ENCODE measurements at regions of chr10 and their contacts with region 1.

Region 1: GRCh38 chr10:80444646-80445319 is 9.3 kb upstream of the TSPAN14 start:
- DNase-seq: no peak
- ATAC-seq: peak; percentile 92
- H3K4me3 ChIP-seq: no peak overlapping the region
- H3K27ac ChIP-seq: no peak overlapping the region
- H3K4me1 ChIP-seq: peaks cover 0 to 17% of the 10 kb centered on the region in 2 experiments; a peak in 2 of 4 replicates
- H3K27me3 ChIP-seq: no peaks in the 10 kb centered on the region
- CTCF ChIP-seq: peak; percentile 82 to 90 (median 86)
- POLR2A ChIP-seq: no peak
- RAD21 ChIP-seq: peak; percentile 98

Region 2: GRCh38 chr10:80371460-80371859 is 73.3 kb before region 1 on chr10:
- CTCF ChIA-PET with region 1: no interaction called
- POLR2A ChIA-PET with region 1: no interaction called
- RAD21 ChIA-PET with region 1: no interaction called
- intact Hi-C with region 1: no loop called
- DNase-seq: no peak
- ATAC-seq: no peak
- H3K4me3 ChIP-seq: no peak overlapping the region
- H3K27ac ChIP-seq: no peak overlapping the region
- H3K4me1 ChIP-seq: no peaks in the 10 kb centered on the region
- H3K27me3 ChIP-seq: no peaks in the 10 kb centered on the region
- CTCF ChIP-seq: no peak
- POLR2A ChIP-seq: no peak
- RAD21 ChIP-seq: no peak

Region 3: DNA sequence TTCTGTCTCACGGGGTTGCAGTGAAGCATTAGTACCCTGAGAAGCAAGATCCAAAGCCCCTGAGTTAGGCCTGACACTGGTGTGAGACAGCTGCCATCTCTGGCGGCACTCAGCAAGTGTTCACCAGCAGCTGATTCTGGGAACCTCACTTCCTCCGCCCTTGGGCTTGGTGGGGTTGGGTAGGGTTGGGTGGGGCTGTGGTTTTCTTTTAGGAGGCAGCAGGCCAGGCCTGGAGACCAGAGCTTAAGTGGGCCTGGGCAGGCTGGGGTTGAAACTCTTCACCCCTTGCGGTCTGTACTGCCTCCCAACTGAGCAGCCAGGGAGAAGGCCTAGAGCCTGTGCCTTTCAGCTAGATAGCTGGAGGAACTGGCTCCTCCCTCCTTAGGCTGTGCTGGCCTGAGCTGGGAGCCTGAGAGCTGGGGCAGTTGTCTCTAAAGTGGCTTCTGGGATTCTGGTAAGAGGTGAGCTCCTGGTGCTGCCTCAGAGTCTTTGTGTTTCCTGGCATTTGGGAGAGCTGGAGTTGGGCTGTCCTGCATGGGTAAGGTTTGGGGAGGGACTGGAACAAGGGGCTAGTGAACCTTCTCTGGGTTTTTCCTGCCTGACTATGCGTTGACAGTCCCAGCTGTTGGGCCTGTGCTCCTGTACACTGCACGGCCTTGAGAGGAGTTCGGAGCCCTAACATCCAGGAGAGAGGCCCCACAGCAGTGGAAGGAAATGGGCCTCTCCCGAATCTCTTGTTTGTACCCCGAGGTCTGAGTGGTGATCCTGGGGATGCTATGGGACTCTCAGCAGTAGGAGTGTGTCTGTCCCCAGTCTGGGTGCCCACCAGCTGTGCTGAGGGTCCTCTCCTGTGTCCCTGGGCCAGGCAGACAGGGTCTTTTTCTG is 14.5 kb after region 1 on chr10:
- CTCF ChIA-PET with region 1: interaction called, 11 read pairs
- POLR2A ChIA-PET with region 1: interaction called, 7 read pairs
- RAD21 ChIA-PET with region 1: interaction called in 1 of 2 experiments, 3 read pairs
- intact Hi-C with region 1: no loop called
- DNase-seq: no peak
- ATAC-seq: peak; percentile 65
- H3K4me3 ChIP-seq: peak overlapping the region in 1 of 2 experiments; percentile 47; a peak in 1 of 4 replicates
- H3K27ac ChIP-seq: peak overlapping the region; percentile 79
- H3K4me1 ChIP-seq: peaks cover 81 to 92% of the 10 kb centered on the region in 2 experiments
- H3K27me3 ChIP-seq: no peaks in the 10 kb centered on the region
- CTCF ChIP-seq: no peak
- POLR2A ChIP-seq: no peak
- RAD21 ChIP-seq: 0 out of 2 replicates have a peak, but pooled peaks have one; percentile 4

Region 4: GRCh38 chr10:80504158-80504811 is 59.5 kb after region 1 on chr10:
- CTCF ChIA-PET with region 1: interaction called, 71 read pairs
- POLR2A ChIA-PET with region 1: interaction called, 4 read pairs
- RAD21 ChIA-PET with region 1: interaction called, 21 to 22 read pairs
- intact Hi-C with region 1: loop called (anchors 1 kb)
- DNase-seq: no peak
- ATAC-seq: no peak
- H3K4me3 ChIP-seq: no peak overlapping the region
- H3K27ac ChIP-seq: peak overlapping the region; percentile 90
- H3K4me1 ChIP-seq: peaks cover 97 to 98% of the 10 kb centered on the region in 2 experiments
- H3K27me3 ChIP-seq: no peaks in the 10 kb centered on the region
- CTCF ChIP-seq: no peak
- POLR2A ChIP-seq: no peak
- RAD21 ChIP-seq: no peak

Region 5: DNA sequence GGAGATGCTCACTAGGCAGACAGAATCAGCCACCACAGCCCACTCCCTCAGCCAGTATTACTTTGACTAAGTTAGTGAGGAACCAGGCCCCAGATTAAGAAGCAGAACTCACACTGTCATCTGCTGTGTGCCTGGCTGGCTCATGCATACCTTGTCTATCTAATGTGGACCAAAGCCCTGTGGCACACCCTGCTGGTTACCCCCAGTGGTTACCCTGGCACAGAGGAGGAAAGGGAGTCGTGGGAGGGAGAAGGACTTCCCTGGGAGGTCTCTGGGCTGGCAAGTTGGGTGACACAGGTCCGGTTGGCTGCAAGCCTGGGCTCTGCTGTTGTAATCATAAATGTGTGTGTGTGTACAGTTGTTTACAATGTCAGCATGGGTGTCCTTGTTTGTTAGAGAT is 85.5 kb after region 1 on chr10:
- CTCF ChIA-PET with region 1: no interaction called
- POLR2A ChIA-PET with region 1: no interaction called
- RAD21 ChIA-PET with region 1: no interaction called
- intact Hi-C with region 1: loop called (anchors 2 kb)
- DNase-seq: peak; percentile 27
- ATAC-seq: peak; percentile 91
- H3K4me3 ChIP-seq: no peak overlapping the region
- H3K27ac ChIP-seq: no peak overlapping the region
- H3K4me1 ChIP-seq: peaks cover 0 to 4% of the 10 kb centered on the region in 2 experiments; a peak in 1 of 4 replicates
- H3K27me3 ChIP-seq: no peaks in the 10 kb centered on the region
- CTCF ChIP-seq: peak; percentile 46 to 68 (median 50); a peak in 5 of 6 replicates
- POLR2A ChIP-seq: no peak
- RAD21 ChIP-seq: peak; percentile 80

Region 6: DNA sequence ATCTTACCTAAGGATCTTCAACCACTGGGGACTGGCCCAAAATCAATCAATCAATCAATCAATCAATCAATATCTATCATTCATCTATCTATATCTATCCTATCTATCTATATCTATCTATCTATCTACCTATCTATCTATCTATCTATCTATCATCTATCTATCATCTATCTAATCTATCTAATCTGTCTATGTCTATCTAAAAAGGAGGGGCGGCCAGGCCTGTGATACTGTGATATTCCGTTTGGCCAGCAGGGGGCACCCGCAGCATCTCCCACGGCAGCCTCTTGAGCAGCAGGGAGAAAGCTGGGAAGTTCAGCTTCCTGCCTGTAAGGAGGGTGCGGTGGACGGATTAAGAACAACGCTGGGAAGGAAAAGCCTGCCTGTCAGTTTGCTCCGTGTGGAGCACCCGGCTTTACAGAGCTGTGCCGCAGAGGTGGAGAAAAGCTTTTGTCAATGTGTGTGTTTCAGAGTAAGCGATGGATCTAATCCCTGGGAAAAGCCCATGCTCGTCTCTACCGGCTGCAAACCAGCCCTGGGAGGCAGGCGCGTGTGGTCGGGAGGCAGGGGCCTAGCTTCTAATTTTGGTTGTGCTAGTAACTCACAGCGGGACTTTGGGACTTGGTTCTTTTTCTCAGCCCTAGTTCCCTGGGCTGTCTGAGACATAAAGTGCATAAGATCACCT is 217.9 kb after region 1 on chr10:
- CTCF ChIA-PET with region 1: interaction called, 7 read pairs
- POLR2A ChIA-PET with region 1: no interaction called
- RAD21 ChIA-PET with region 1: interaction called in 1 of 2 experiments, 5 read pairs
- intact Hi-C with region 1: loop called (anchors 2 kb)
- DNase-seq: peak; percentile 61
- ATAC-seq: peak; percentile 87
- H3K4me3 ChIP-seq: peak overlapping the region; percentile 38 to 39
- H3K27ac ChIP-seq: no peak overlapping the region
- H3K4me1 ChIP-seq: peaks cover 3 to 13% of the 10 kb centered on the region in 2 experiments; a peak in 2 of 4 replicates
- H3K27me3 ChIP-seq: no peaks in the 10 kb centered on the region
- CTCF ChIP-seq: peak; percentile 75 to 88 (median 83)
- POLR2A ChIP-seq: no peak
- RAD21 ChIP-seq: peak; percentile 73

Region 7: DNA sequence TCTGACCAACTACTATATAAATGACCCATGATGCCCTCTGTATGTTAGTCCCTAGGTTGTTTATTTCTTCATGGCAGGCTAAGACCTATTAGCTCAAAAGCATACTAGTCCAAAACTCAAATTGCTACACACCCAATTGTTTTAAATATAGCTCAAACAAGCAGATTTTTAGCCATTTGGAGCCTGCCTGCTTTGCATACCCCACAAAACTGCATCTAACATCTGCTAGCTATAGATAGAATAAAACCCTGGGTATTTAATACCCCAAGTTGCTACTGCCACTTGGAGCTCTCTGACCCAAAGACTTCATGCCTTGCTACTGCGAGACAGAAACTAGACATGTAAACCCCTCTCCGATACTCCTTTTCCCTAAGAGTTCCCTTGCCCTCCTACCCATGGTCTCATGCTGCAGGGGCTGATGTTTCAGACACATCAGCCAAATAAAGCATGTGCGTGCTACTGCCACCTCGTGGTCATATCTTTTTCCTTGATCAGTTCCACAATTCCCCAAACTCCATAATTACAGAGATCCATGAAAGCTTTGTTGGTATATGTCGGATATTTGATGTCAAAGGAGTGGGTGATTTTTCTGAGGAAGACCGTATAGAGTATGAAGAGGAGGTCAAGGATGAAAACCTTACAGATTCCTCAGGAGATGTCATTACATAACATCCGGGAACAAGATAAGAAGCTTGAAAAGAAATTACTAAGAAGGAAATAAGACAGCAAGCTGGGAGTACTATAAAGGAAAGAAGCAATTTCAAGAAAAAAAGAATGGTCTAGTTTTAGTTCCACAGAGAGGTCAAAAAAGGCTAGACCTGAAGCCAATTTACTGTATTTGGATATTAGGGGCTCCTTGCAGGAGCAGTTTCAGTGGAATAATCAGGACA is 479.5 kb after region 1 on chr10:
- CTCF ChIA-PET with region 1: interaction called, 11 read pairs
- POLR2A ChIA-PET with region 1: no interaction called
- RAD21 ChIA-PET with region 1: no interaction called
- intact Hi-C with region 1: loop called (anchors 2 kb)
- DNase-seq: peak; percentile 21
- ATAC-seq: peak; percentile 78
- H3K4me3 ChIP-seq: no peak overlapping the region
- H3K27ac ChIP-seq: no peak overlapping the region
- H3K4me1 ChIP-seq: no peaks in the 10 kb centered on the region
- H3K27me3 ChIP-seq: no peaks in the 10 kb centered on the region
- CTCF ChIP-seq: peak; percentile 49 to 78 (median 60); a peak in 5 of 6 replicates
- POLR2A ChIP-seq: no peak
- RAD21 ChIP-seq: peak; percentile 49